Sigmoid colon (tissue), 7 donors: ENCODE measurements at regions of chr1 and their contacts with region 1.

Region 1: DNA sequence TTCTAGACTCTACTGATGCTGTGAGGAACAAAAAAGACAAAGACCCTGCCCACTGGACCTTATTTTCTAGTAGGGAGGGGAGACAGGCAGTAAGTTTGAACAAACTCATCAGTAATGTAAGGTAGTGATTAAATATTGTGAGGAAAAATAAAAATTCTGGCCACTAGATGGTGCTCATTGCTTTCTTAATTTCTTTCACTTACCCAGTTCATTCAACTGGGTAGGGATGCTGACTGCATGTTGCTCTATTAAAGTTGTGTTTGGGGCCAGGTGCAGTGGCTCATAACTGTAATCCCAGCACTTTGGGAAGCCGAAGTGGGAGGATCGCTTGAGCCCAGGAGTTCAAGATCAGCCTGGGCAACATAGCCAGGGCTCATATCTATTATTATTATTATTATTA is 6.3 kb upstream of the KYAT3 start:
- DNase-seq: no peak
- H3K4me3 ChIP-seq: no peak overlapping the region
- H3K27ac ChIP-seq: no peak overlapping the region
- H3K4me1 ChIP-seq: no peaks in the 10 kb centered on the region
- H3K27me3 ChIP-seq: no peaks in the 10 kb centered on the region
- CTCF ChIP-seq: peak; percentile 36 to 53 (median 52)
- EP300 ChIP-seq: no peak
- POLR2A ChIP-seq: no peak

Region 2: GRCh38 chr1:88655685-88656299 is 342.9 kb before region 1 on chr1:
- intact Hi-C with region 1: no loop called
- DNase-seq: no peak
- H3K4me3 ChIP-seq: no peak overlapping the region
- H3K27ac ChIP-seq: no peak overlapping the region
- H3K4me1 ChIP-seq: no peaks in the 10 kb centered on the region
- H3K27me3 ChIP-seq: no peaks in the 10 kb centered on the region
- CTCF ChIP-seq: peak; percentile 18 to 53 (median 42)
- EP300 ChIP-seq: no peak
- POLR2A ChIP-seq: no peak

Region 3: GRCh38 chr1:89190017-89190416 is 191.3 kb after region 1 on chr1:
- intact Hi-C with region 1: no loop called
- DNase-seq: no peak
- H3K4me3 ChIP-seq: no peak overlapping the region
- H3K27ac ChIP-seq: no peak overlapping the region
- H3K4me1 ChIP-seq: no peaks in the 10 kb centered on the region
- H3K27me3 ChIP-seq: no peaks in the 10 kb centered on the region
- CTCF ChIP-seq: no peak
- EP300 ChIP-seq: no peak
- POLR2A ChIP-seq: no peak

Region 4: DNA sequence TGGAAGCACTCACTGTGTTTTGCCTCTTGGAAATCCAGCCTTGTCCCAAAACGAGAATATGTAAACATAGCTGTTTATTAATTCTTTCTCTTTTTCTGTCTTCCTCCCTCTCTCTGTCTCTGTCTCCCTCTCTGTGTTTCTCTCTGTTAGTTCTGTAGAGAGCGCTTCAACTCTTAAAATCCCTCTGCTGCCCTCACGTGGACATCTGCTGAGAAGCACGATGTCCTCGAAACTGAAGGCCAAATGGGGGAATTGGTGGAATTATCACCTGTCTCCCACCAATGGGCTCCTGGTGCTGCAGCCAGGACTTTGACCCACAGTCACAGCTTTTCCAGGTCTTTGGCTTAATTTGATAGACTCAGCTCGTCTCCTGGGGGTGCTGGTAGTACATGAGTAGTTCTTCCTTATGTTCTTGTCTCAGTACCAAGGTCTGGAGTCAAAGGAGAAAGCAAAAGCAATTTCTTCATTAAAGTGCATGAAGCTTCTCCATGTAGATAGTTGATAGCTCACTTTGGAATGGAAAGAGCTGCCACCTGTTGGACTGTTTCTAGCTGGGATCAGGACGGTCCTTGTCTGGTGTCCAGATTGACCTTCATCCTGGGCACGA is 359.7 kb after region 1 on chr1:
- intact Hi-C with region 1: loop called (anchors 1 kb)
- DNase-seq: peak; percentile 83
- H3K4me3 ChIP-seq: no peak overlapping the region
- H3K27ac ChIP-seq: no peak overlapping the region
- H3K4me1 ChIP-seq: peaks cover 0 to 7% (median 3%) of the 10 kb centered on the region in 4 donors
- H3K27me3 ChIP-seq: no peaks in the 10 kb centered on the region
- CTCF ChIP-seq: peak; percentile 61 to 76 (median 66)
- EP300 ChIP-seq: no peak
- POLR2A ChIP-seq: no peak